Transverse colon (tissue), 4 donors: ENCODE measurements at regions of chr15 and their contacts with region 1.

Region 1: GRCh38 chr15:51874751-51875528 is 45.5 kb downstream of the TMOD3 start:
- DNase-seq: peak; percentile 48
- H3K4me3 ChIP-seq: no peak overlapping the region
- H3K27ac ChIP-seq: peak overlapping the region; percentile 34 to 85 (median 77)
- H3K4me1 ChIP-seq: peaks cover 11 to 44% (median 30%) of the 10 kb centered on the region in 4 donors
- H3K27me3 ChIP-seq: no peaks in the 10 kb centered on the region
- CTCF ChIP-seq: no peak
- EP300 ChIP-seq: no peak
- POLR2A ChIP-seq: no peak

Region 2: DNA sequence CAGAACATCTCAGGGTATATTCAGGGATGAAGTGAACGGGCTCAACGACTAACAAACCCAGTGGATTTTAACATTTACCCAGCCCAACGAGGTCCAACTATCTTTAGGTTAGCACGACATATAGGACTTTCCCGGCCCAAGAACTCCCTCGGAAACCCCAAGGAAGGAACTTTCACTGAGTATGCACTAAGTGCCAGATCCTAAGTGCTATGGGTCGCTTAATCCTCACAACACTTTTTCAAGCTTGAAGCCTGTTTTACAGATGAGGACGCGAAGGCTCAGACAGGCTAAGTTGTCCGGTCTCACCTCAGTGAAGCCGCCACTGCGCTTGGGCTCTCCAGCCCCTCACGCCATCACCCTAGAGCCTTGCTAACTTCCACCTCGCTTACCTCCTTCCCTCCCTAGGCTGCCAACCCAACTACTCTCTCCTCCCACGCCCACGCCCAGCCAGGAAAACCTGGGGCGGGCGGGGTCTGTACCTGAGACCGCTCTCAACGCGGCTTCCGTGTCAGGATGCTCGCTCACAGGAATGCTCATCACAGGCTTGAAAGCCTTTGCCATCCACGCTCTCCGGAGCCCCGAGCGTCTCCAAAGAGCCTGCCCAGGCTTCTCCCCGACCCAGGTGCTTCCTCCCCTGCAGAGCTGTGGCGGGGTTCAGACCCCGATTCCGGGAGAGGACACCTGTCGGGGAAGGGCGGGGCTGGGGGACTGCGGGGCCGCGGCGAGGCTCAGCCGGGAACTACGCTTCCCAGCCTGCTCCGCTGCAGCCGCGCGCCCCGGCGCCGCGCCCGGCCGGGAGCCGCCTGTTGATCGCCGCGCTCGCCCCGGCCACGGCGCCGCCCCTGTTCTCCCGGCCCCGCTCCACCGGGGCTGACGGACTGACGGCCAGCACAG is 123.9 kb before region 1 on chr15 and contains the start of gene TMOD2:
- in situ Hi-C with region 1: loop called in 1 of 4 experiments (anchors 25 kb)
- intact Hi-C with region 1: no loop called
- DNase-seq: peak; percentile 49
- H3K4me3 ChIP-seq: peak within 1 kb of the TSS; percentile 76 to 92 (median 80)
- H3K27ac ChIP-seq: peak within 1 kb of the TSS; percentile 64 to 84 (median 82)
- H3K4me1 ChIP-seq: peaks cover 0 to 20% (median 10%) of the 10 kb centered on the region in 4 donors
- H3K27me3 ChIP-seq: peaks cover 9% of the 10 kb centered on the region
- CTCF ChIP-seq: no peak
- EP300 ChIP-seq: no peak
- POLR2A ChIP-seq: no peak
- total RNA-seq, gene TMOD2: 1.8 to 6.8 (median 5.3) TPM